ENCODE measurements at regions of chr2 and their contacts with region 1.

Region 1: GRCh38 chr2:190512539-190513095 is 21.9 kb downstream of the NEMP2 start:
- DNase-seq: no peak
- ATAC-seq: no peak

Region 2: GRCh38 chr2:190382851-190383250 is 129.8 kb before region 1 on chr2:
- intact Hi-C with region 1: loop called (anchors 2 kb)
- DNase-seq: no peak
- ATAC-seq: peak; percentile 71

Region 3: DNA sequence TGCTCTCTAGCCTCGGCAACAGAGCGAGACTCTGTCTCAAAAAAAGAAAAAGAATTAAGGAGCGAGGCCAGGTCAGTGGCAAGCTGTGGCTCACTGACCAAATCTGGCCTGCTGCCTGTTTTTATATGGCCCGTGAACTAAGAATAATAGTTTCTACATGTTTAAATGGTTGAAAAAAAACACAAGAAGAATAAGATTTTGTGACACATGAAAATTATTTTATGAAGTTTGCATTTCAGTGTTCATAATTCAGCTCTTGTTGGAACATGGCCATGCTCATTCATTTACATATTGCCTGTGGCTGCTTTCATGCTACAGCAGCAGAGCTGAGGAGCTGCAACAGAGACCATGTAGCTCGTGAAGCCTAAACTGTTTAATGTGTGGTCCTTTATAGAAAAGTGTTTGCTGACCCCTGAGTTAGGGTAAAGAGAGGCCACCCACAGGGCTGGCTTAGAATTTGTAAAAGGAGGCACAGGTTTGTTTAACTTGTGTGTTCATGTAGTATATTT is 45.0 kb before region 1 on chr2:
- intact Hi-C with region 1: no loop called
- DNase-seq: no peak
- ATAC-seq: peak; percentile 17